ENCODE measurements at regions of chr12 and their contacts with region 1.

Region 1: DNA sequence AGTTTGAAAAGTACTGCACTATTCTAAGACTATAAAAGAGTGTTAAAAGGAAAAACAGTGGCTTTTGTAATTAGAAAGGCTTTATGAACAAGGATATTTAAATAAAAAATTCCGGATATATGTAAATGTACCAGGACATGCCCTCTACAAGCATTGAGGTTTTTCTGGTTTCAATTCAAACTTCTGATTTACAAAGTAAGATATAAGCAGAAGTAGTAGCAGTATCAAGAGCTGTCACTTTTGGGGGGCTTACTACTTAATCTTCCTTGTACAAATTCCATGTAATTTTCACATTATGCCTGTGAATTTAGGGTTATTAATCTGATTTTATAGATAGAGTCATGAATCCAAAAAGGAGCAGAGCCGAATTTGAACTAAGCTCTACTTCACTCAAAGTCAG is 170.3 kb upstream of the ATP2B1 start:
- DNase-seq: no peak
- H3K4me3 ChIP-seq: no peak overlapping the region
- H3K27ac ChIP-seq: no peak overlapping the region
- H3K4me1 ChIP-seq: no peaks in the 10 kb centered on the region
- H3K27me3 ChIP-seq: no peaks in the 10 kb centered on the region
- CTCF ChIP-seq: no peak
- POLR2A ChIP-seq: no peak

Region 2: DNA sequence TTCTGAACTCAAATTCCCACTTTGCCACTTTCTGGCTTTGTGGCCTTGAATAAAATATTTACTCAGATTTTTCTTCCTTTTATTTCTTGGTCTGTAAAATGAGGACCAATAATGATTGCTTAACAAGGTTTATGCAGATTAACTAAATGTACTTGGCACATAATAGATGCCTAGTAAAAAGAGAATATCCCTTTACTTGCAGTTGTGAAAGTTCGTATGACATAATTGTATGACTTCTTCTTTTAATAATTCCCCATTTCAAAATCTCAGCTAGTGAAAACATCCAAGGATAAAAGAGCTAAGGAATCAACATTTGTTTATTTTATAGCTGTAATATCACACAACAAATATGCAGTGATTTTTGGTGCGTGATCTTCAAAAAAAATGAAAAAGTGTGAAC is 45.2 kb after region 1 on chr12:
- intact Hi-C with region 1: loop called (anchors 2 kb)
- DNase-seq: no peak
- H3K4me3 ChIP-seq: no peak overlapping the region
- H3K27ac ChIP-seq: no peak overlapping the region
- H3K4me1 ChIP-seq: no peaks in the 10 kb centered on the region
- H3K27me3 ChIP-seq: no peaks in the 10 kb centered on the region
- CTCF ChIP-seq: no peak
- POLR2A ChIP-seq: no peak